MCF 10A (cell line): ENCODE measurements at regions of chr11 and their contacts with region 1.

Region 1: GRCh38 chr11:110092515-110093404 is at the start of gene ZC3H12C:
- DNase-seq: peak; percentile 93
- H3K4me3 Mint-ChIP-seq: peak within 1 kb of the TSS; percentile 98
- H3K27ac Mint-ChIP-seq: peak within 1 kb of the TSS; percentile 98
- H3K4me1 Mint-ChIP-seq: peaks cover 26% of the 10 kb centered on the region
- H3K27me3 Mint-ChIP-seq: no peaks in the 10 kb centered on the region
- CTCF ChIP-seq: peak; percentile 41
- total RNA-seq, gene ZC3H12C: 30.9 and 37.7 TPM in 2 replicates

Region 2: DNA sequence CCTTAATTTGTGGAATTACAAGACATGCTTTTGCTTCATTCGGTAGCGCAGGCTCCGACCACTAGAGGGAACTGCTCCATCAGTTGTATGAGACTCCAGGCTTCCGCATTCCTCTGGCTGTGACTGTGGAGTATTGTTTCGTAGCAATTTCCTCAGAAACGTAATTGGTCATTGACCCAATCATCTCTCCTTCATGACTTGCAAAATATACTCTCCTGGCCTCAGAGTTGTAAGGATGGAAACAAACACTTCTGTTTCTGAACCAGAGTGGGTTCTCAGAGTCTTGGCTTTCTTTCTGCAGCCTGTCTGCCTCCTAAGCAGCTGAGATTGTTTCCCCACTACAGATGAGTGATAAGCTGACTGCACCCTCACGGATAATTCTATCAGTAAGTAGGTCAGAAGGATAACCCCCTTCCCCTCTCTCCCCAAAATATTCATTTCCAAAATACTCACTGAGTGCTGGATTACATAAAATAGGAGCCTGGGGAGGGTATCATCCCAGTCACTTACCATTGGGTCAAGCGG is 146.4 kb before region 1 on chr11:
- CTCF ChIA-PET with region 1: interaction called, 10 read pairs
- POLR2A ChIA-PET with region 1: interaction called, 148 read pairs
- intact Hi-C with region 1: loop called (anchors 1 kb)
- DNase-seq: peak; percentile 93
- H3K4me3 Mint-ChIP-seq: peak overlapping the region; percentile 66
- H3K27ac Mint-ChIP-seq: peak overlapping the region; percentile 90
- H3K4me1 Mint-ChIP-seq: peaks cover 13% of the 10 kb centered on the region
- H3K27me3 Mint-ChIP-seq: no peaks in the 10 kb centered on the region
- CTCF ChIP-seq: peak; percentile 85

Region 3: GRCh38 chr11:110069158-110069737 is 23.5 kb before region 1 on chr11:
- CTCF ChIA-PET with region 1: interaction called, 3 read pairs
- POLR2A ChIA-PET with region 1: interaction called, 197 read pairs
- intact Hi-C with region 1: no loop called
- DNase-seq: peak; percentile 89
- H3K4me3 Mint-ChIP-seq: no peak overlapping the region
- H3K27ac Mint-ChIP-seq: peak overlapping the region; percentile 73
- H3K4me1 Mint-ChIP-seq: peaks cover 14% of the 10 kb centered on the region
- H3K27me3 Mint-ChIP-seq: no peaks in the 10 kb centered on the region
- CTCF ChIP-seq: no peak

Region 4: GRCh38 chr11:110121204-110121603 is 28.4 kb after region 1 on chr11:
- CTCF ChIA-PET with region 1: interaction called, 3 read pairs
- POLR2A ChIA-PET with region 1: interaction called, 18 read pairs
- intact Hi-C with region 1: no loop called
- DNase-seq: peak; percentile 71
- H3K4me3 Mint-ChIP-seq: peak overlapping the region; percentile 56
- H3K27ac Mint-ChIP-seq: peak overlapping the region; percentile 78
- H3K4me1 Mint-ChIP-seq: peaks cover 41% of the 10 kb centered on the region
- H3K27me3 Mint-ChIP-seq: no peaks in the 10 kb centered on the region
- CTCF ChIP-seq: no peak

Region 5: GRCh38 chr11:110141812-110142211 is 49.1 kb after region 1 on chr11:
- CTCF ChIA-PET with region 1: no interaction called
- POLR2A ChIA-PET with region 1: interaction called, 12 read pairs
- intact Hi-C with region 1: no loop called
- DNase-seq: peak; percentile 31
- H3K4me3 Mint-ChIP-seq: no peak overlapping the region
- H3K27ac Mint-ChIP-seq: no peak overlapping the region
- H3K4me1 Mint-ChIP-seq: peaks cover 18% of the 10 kb centered on the region
- H3K27me3 Mint-ChIP-seq: no peaks in the 10 kb centered on the region
- CTCF ChIP-seq: no peak

Region 6: DNA sequence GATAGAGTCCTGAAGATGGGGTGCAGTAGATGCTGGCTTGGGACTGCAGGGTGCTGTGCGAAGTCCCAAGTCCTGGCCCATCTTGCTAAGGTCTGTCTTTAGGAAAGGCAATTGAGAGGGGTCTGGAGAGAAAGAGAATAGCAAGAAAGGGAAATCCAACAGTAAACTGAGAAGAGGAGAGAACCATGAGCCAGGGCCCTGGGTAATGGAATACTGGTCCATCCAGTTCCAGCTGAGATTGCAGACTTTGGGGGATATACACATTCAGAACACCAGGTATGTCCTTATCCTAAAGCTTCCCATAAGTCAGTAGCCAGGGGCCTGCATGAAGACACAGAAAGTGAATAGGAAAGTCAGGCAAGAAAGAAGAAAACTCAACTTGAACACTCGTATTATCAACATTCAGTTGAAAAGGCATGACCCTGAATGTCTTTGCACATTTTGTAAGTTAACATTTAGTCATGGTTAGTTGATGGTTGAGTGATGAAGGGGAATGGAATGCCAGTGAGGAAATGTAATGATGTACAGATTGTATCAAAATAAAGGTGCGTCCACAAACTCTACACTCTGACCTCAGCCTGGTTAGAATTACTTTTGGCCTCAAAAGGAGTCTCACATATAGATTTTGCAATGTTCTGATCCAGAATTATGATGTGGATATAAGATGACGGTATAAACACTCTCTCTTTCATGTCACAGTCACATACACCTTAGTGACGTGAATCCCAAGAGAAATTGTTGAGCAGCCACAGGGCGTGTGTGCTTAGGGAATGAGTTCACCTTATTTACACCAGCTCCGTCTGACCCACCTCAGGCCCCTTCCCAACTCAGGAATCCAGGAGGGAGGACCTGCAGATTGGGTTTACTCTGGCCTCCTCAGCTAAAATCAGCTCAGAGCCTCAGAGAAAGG is 103.3 kb after region 1 on chr11:
- CTCF ChIA-PET with region 1: interaction called, 3 read pairs
- POLR2A ChIA-PET with region 1: interaction called, 146 read pairs
- intact Hi-C with region 1: loop called (anchors 2 kb)
- DNase-seq: peak; percentile 95
- H3K4me3 Mint-ChIP-seq: peak overlapping the region; percentile 47
- H3K27ac Mint-ChIP-seq: peak overlapping the region; percentile 99
- H3K4me1 Mint-ChIP-seq: peaks cover 58% of the 10 kb centered on the region
- H3K27me3 Mint-ChIP-seq: no peaks in the 10 kb centered on the region
- CTCF ChIP-seq: no peak

Region 7: DNA sequence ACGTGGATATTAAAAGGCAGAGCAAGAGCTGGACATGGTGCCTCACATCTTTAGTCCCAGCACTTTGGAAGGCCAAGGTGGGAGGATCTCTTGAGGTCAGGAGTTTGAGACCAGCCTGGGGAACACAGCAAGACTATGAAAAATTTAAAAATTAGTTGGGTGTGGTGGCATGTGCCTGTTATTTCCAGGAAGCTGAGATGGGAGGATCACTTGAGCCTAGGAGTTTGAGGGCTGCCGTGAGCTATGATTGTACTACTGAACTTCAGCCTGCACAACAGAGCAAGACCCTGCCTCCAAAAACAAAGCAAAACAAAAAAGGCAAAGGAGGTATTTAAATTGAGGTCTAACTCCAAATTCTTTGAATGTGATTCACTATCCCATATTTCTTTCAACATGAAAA is 180.2 kb after region 1 on chr11:
- CTCF ChIA-PET with region 1: no interaction called
- POLR2A ChIA-PET with region 1: no interaction called
- intact Hi-C with region 1: no loop called
- DNase-seq: no peak
- H3K4me3 Mint-ChIP-seq: no peak overlapping the region
- H3K27ac Mint-ChIP-seq: no peak overlapping the region
- H3K4me1 Mint-ChIP-seq: peaks cover 20% of the 10 kb centered on the region
- H3K27me3 Mint-ChIP-seq: no peaks in the 10 kb centered on the region
- CTCF ChIP-seq: no peak

Region 8: GRCh38 chr11:110327508-110327907 is 234.7 kb after region 1 on chr11:
- CTCF ChIA-PET with region 1: no interaction called
- POLR2A ChIA-PET with region 1: no interaction called
- intact Hi-C with region 1: no loop called
- DNase-seq: no peak
- H3K4me3 Mint-ChIP-seq: no peak overlapping the region
- H3K27ac Mint-ChIP-seq: no peak overlapping the region
- H3K4me1 Mint-ChIP-seq: no peaks in the 10 kb centered on the region
- H3K27me3 Mint-ChIP-seq: no peaks in the 10 kb centered on the region
- CTCF ChIP-seq: no peak

Region 9: DNA sequence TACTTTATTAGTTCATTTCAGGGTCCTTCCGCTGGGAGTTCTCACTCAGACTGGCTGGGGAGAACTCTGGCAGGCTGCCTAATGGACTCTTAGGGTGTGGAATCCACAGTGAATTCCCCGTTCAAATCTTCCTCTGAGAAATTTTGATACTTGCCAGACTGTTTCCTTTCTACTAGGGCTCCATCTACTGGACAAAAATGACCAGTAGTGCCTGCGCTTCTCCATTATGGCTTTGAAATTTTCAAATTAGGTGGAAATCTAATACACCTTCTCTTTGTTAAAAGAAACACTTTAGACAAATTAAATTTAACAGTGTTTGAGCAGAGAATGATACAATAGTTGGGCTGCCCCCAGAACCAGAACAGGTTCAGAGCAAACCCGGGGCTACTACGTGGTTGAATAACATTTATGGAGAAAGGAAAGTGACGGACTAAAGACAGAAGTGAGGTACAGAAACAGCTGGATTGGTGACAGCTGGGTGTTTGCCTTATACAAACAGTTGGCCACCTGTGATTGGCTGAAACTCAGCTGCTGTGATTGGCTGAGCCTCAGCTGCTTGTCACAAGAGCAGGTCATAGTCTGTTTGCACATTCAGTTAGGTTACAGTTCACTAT is 284.1 kb after region 1 on chr11:
- CTCF ChIA-PET with region 1: no interaction called
- POLR2A ChIA-PET with region 1: interaction called, 5 read pairs
- intact Hi-C with region 1: loop called (anchors 10 kb)
- DNase-seq: peak; percentile 84
- H3K4me3 Mint-ChIP-seq: no peak overlapping the region
- H3K27ac Mint-ChIP-seq: peak overlapping the region; percentile 61
- H3K4me1 Mint-ChIP-seq: peaks cover 16% of the 10 kb centered on the region
- H3K27me3 Mint-ChIP-seq: no peaks in the 10 kb centered on the region
- CTCF ChIP-seq: peak; percentile 52